ENCODE measurements at regions of chr2 and their contacts with region 1.

Region 1: DNA sequence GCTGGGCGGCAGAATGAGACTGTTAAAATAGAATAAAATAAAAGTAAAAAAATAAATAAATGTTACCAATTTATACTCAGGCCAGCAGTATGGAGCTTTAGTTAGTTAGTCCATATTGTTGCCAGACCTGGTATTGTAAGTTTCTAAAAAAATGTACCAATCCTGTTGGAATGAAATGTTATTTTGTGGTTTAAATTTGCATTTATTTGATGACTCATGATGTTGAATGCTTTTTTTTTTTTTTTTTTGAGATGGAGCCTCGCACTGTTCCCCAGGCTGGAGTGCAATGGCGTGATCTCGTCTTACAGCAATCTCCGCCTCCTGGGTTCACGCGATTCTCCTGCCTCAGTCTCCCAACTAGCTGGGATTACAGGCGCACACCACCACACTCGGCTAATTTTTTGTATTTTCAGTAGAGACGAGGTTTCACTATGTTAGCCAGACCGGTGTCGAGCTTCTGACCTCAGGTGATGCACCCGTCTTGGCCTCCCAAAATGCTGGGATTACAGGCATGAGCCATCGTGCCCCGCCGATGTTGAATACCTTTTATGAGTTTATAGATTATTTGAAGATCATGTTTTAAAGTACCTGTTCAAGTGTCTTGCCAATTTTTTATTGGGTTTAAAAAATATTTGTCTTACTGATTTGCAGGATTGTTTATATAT is 5.7 kb upstream of the PTPRN start:
- DNase-seq: no peak
- H3K4me3 ChIP-seq: no peak overlapping the region
- H3K27ac ChIP-seq: no peak overlapping the region
- H3K4me1 ChIP-seq: no peaks in the 10 kb centered on the region
- H3K27me3 ChIP-seq: peaks cover 0 to 6% of the 10 kb centered on the region in 2 donors
- CTCF ChIP-seq: no peak
- POLR2A ChIP-seq: no peak

Region 2: DNA sequence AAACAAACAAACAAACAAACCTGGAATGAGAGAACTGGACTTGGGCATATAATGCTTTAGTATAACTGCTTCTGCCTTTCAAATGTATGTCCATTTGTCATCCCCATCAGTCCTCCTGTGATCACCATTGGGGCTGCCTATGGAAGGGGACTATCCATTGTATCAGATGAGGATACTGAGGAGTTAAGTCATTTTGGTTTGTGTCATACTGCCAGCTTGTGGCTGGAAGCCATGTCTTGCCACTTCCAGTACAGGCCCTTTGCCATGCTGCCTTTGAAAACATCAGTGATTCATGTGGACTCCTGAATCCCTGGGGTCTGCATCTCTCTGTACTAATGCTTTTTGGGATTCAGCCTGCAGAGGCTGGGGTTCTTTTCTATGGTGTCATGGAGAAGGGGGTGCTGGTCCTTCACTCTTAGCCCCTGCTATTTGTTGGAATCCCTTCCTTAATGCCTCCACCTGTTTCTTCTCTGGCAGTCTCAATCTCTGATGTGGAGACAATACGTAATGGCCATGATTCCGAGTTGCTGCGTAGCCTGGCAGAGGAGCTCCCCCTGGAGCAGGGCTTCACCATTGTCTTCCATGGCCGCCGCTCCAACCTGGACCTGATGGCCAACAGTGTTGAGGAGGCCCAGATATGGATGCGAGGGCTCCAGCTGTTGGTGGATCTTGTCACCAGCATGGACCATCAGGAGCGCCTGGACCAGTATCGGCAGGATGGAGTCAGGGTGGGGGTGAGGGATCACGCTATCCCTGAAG is 696.7 kb before region 1 on chr2:
- intact Hi-C with region 1: loop called (anchors 5 kb)
- DNase-seq: no peak
- H3K4me3 ChIP-seq: no peak overlapping the region
- H3K27ac ChIP-seq: no peak overlapping the region
- H3K4me1 ChIP-seq: no peaks in the 10 kb centered on the region
- H3K27me3 ChIP-seq: no peaks in the 10 kb centered on the region
- CTCF ChIP-seq: no peak
- POLR2A ChIP-seq: no peak

Measured in breast epithelium (tissue), 4 donors.